Thyroid gland (tissue), 4 donors: ENCODE measurements at regions of chr5 and their contacts with region 1.

Region 1: GRCh38 chr5:88883059-88883835 is at the start of gene MEF2C:
- DNase-seq: peak; percentile 82 to 83
- H3K4me3 ChIP-seq: peak within 1 kb of the TSS; percentile 45 to 83 (median 47)
- H3K27ac ChIP-seq: peak within 1 kb of the TSS; percentile 89 to 97 (median 95)
- H3K4me1 ChIP-seq: peaks cover 16 to 38% of the 10 kb centered on the region in 2 donors
- H3K27me3 ChIP-seq: no peaks in the 10 kb centered on the region
- CTCF ChIP-seq: no peak
- POLR2A ChIP-seq: peak in 1 of 2 donors; percentile 85
- total RNA-seq, gene MEF2C: 51.0 to 78.6 (median 65.7) TPM

Region 2: GRCh38 chr5:88732181-88732633 is 151.0 kb before region 1 on chr5:
- intact Hi-C with region 1: loop called (anchors 10 kb)
- DNase-seq: peak; percentile 20 to 39
- H3K4me3 ChIP-seq: no peak overlapping the region
- H3K27ac ChIP-seq: peak overlapping the region; percentile 52 to 69 (median 66)
- H3K4me1 ChIP-seq: peaks cover 0 to 12% of the 10 kb centered on the region in 2 donors
- H3K27me3 ChIP-seq: no peaks in the 10 kb centered on the region
- CTCF ChIP-seq: no peak
- POLR2A ChIP-seq: no peak

Region 3: GRCh38 chr5:88833371-88834130 is 49.7 kb before region 1 on chr5:
- intact Hi-C with region 1: loop called (anchors 10 kb)
- DNase-seq: peak; percentile 17
- H3K4me3 ChIP-seq: no peak overlapping the region
- H3K27ac ChIP-seq: peak overlapping the region; percentile 32 to 59 (median 54)
- H3K4me1 ChIP-seq: peaks cover 17 to 26% of the 10 kb centered on the region in 2 donors
- H3K27me3 ChIP-seq: no peaks in the 10 kb centered on the region
- CTCF ChIP-seq: no peak
- POLR2A ChIP-seq: no peak

Region 4: GRCh38 chr5:88979244-88979643 is 96.0 kb after region 1 on chr5:
- intact Hi-C with region 1: no loop called
- DNase-seq: no peak
- H3K4me3 ChIP-seq: no peak overlapping the region
- H3K27ac ChIP-seq: no peak overlapping the region
- H3K4me1 ChIP-seq: peaks cover 3 to 5% of the 10 kb centered on the region in 2 donors
- H3K27me3 ChIP-seq: no peaks in the 10 kb centered on the region
- CTCF ChIP-seq: no peak
- POLR2A ChIP-seq: no peak